ENCODE measurements at regions of chr17 and their contacts with region 1.

Region 1: GRCh38 chr17:48944519-48945260 is at the start of gene SNF8:
- DNase-seq: peak; percentile 99
- H3K4me3 Mint-ChIP-seq: peak within 1 kb of the TSS; percentile 100
- H3K27ac Mint-ChIP-seq: peak within 1 kb of the TSS; percentile 99
- H3K4me1 Mint-ChIP-seq: peaks cover 12% of the 10 kb centered on the region
- H3K27me3 Mint-ChIP-seq: no peaks in the 10 kb centered on the region
- total RNA-seq, gene SNF8: 143 and 147 TPM in 2 replicates

Region 2: GRCh38 chr17:48791128-48792032 is 153.3 kb before region 1 on chr17:
- intact Hi-C with region 1: no loop called
- DNase-seq: peak; percentile 73
- H3K4me3 Mint-ChIP-seq: no peak overlapping the region
- H3K27ac Mint-ChIP-seq: no peak overlapping the region
- H3K4me1 Mint-ChIP-seq: peaks cover 18% of the 10 kb centered on the region
- H3K27me3 Mint-ChIP-seq: peaks cover 47% of the 10 kb centered on the region

Region 3: DNA sequence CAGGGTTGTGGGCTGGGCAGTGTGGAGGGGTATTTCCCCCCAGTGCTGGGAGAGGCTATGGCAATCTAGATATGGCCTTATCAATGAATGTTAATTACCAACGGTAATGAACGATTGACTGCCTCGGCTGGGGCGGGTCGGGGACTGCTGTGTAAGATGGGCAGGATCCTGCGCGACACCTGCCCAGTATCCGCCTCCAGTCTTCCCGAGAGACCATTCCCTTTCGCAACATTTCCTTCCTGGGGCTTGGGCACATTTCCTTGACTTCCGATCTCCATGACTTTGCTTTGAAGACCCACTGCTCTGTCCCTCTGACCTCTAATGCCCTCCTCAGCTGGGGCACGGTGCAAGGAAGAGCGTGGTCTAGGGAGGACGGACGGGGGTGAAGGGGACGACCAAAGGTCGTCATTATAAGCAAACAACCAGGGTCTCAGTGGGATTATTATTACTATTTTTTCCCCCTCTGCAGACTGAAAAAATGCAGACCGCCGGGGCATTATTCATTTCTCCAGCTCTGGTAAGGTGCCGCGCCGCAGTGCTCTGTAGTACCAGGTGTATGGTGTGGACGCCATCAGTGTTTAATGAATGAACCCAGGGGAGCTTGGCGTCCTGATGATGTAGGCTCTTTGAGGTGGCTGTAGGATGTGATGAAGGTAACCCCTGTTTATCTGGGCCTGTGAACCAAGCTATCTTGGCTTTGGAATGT is 51.6 kb before region 1 on chr17:
- intact Hi-C with region 1: loop called (anchors 1 kb)
- DNase-seq: no peak
- H3K4me3 Mint-ChIP-seq: peak overlapping the region; percentile 90
- H3K27ac Mint-ChIP-seq: peak overlapping the region; percentile 97
- H3K4me1 Mint-ChIP-seq: peaks cover 18% of the 10 kb centered on the region
- H3K27me3 Mint-ChIP-seq: peaks cover 3% of the 10 kb centered on the region

Region 4: GRCh38 chr17:48908047-48908843 is 36.4 kb before region 1 on chr17 and contains the start of gene UBE2Z:
- intact Hi-C with region 1: loop called (anchors 2 kb)
- DNase-seq: peak; percentile 95
- H3K4me3 Mint-ChIP-seq: peak within 1 kb of the TSS; percentile 96
- H3K27ac Mint-ChIP-seq: peak within 1 kb of the TSS; percentile 98
- H3K4me1 Mint-ChIP-seq: peaks cover 39% of the 10 kb centered on the region
- H3K27me3 Mint-ChIP-seq: no peaks in the 10 kb centered on the region
- total RNA-seq, gene UBE2Z: 89.3 and 91.4 TPM in 2 replicates

Region 5: DNA sequence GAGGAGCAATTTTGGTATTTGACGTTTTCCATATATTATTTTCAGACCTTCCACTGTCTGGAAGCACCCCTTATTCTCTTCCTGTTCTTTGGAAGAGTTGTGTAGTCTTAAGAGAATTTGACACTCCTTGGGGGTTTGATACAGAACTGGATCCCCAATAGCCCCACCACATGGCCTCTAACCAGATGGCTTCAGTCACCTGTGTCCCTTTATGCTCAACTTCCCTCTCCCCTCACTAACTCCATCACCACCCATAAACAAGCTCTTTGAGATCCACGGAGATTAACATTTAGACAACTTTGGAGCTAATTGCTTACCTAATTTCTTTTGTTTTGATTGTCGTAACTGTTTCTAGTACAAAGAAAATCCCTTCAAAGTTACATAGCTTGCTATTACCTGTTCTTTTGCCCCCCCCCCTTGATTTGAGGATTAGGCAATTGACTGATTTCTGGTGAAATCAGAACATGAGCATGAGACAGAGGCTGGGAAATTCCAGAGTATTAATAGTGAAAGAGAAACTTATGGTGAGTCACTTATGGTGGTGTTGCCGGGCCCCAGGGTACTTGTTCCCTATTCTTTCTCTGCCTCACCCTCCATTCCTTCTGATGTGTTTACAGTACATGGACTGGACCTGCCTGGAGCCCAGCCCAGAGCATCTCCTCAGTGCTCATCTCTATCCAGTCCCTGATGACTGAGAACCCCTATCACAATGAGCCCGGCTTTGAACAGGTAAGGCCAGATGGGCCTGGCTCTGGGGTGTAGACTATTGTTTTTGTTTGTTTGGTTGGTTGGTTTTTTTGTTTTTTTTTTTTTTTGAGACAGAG is 29.0 kb before region 1 on chr17:
- intact Hi-C with region 1: loop called (anchors 1 kb)
- DNase-seq: peak; percentile 90
- H3K4me3 Mint-ChIP-seq: peak overlapping the region; percentile 80
- H3K27ac Mint-ChIP-seq: peak overlapping the region; percentile 98
- H3K4me1 Mint-ChIP-seq: peaks cover 42% of the 10 kb centered on the region
- H3K27me3 Mint-ChIP-seq: no peaks in the 10 kb centered on the region

Region 6: GRCh38 chr17:49031965-49032928 is 87.6 kb after region 1 on chr17:
- intact Hi-C with region 1: loop called (anchors 1 kb)
- DNase-seq: peak; percentile 85
- H3K4me3 Mint-ChIP-seq: no peak overlapping the region
- H3K27ac Mint-ChIP-seq: no peak overlapping the region
- H3K4me1 Mint-ChIP-seq: peaks cover 6% of the 10 kb centered on the region
- H3K27me3 Mint-ChIP-seq: peaks cover 7% of the 10 kb centered on the region